Activated CD4-positive, alpha-beta T cell treated with anti-CD3 and anti-CD28 coated beads for 36 hours (primary cell): ENCODE measurements at regions of chr2 and their contacts with region 1.

Region 1: DNA sequence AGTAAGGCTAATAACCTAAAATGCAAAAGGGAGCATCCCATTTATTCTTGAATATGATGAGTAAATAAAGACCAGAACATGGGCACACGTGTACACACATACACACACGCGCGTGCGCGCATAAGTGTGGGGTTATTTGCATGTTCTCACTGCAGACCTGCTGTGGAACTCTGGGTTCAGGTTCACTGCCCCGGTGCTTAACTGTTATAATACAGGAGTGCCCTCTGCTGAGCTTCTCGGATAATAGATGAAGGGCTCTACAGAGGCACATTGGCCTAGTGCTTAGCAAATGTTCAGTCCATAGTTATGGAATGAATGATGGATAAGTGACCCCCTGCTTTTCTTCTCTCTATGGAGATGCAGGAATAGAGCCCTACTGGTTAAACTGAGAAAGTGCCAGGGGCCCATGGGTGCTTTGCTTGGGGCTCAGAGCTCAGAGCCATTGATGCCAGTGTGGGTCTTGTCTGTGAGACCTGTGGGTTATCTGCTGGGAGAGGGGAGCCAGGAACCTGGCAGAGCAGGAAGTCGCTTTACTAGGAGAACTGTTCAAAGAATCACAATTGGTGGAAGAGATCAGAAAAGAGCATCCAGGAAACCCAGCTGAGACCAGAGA is 3.6 kb upstream of the ARL4C start:
- DNase-seq: peak; percentile 81
- ATAC-seq: peak; percentile 69
- H3K4me3 Mint-ChIP-seq: no peak overlapping the region
- H3K27ac Mint-ChIP-seq: peak overlapping the region; percentile 32
- H3K4me1 Mint-ChIP-seq: peaks cover 27% of the 10 kb centered on the region
- H3K27me3 Mint-ChIP-seq: no peaks in the 10 kb centered on the region

Region 2: GRCh38 chr2:232838406-232838874 is 1662.1 kb before region 1 on chr2:
- CTCF ChIA-PET with region 1: no interaction called
- POLR2A ChIA-PET with region 1: no interaction called
- intact Hi-C with region 1: no loop called
- DNase-seq: peak; percentile 76
- ATAC-seq: peak; percentile 94
- H3K4me3 Mint-ChIP-seq: peak overlapping the region; percentile 15
- H3K27ac Mint-ChIP-seq: peak overlapping the region; percentile 84
- H3K4me1 Mint-ChIP-seq: peaks cover 24% of the 10 kb centered on the region
- H3K27me3 Mint-ChIP-seq: no peaks in the 10 kb centered on the region

Region 3: GRCh38 chr2:233854241-233854981 is 646.1 kb before region 1 on chr2 and contains the start of gene HJURP:
- CTCF ChIA-PET with region 1: interaction called, 3 read pairs
- POLR2A ChIA-PET with region 1: no interaction called
- intact Hi-C with region 1: loop called in 1 of 2 experiments (anchors 2 kb)
- DNase-seq: peak; percentile 96
- ATAC-seq: peak; percentile 95
- H3K4me3 Mint-ChIP-seq: peak within 1 kb of the TSS; percentile 97
- H3K27ac Mint-ChIP-seq: peak within 1 kb of the TSS; percentile 98
- H3K4me1 Mint-ChIP-seq: peaks cover 26% of the 10 kb centered on the region
- H3K27me3 Mint-ChIP-seq: no peaks in the 10 kb centered on the region
- total RNA-seq, gene HJURP: 94.6 to 111 TPM

Region 4: DNA sequence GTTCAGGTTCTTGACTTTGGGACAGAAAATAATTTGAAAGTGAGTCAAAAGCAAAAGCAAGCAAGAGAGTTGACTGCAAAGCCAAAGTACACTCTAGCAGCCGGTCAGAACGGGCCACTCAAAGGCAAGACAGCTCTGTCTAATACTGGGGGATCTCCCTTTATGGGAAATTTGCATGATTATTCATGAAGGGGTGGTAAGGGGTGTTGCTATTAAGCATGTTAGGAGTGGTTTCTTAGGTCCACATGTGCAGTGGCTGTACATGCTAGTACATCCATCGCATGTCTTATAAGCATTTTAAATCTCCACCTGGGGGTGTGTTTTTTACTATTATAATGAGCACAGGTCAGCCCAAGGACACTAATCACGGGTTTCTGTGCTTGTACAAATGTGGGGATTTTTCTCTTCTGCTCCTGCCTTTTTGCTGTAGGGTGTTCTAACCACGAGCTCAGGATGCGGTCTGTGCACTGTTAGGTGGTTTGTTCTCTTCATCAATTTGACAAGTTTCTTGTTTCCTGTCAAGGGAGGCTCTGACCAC is 510.2 kb before region 1 on chr2:
- CTCF ChIA-PET with region 1: no interaction called
- POLR2A ChIA-PET with region 1: no interaction called
- intact Hi-C with region 1: loop called in 1 of 2 experiments (anchors 5 kb)
- DNase-seq: peak; percentile 80
- ATAC-seq: peak; percentile 92
- H3K4me3 Mint-ChIP-seq: peak overlapping the region; percentile 13
- H3K27ac Mint-ChIP-seq: peak overlapping the region; percentile 28
- H3K4me1 Mint-ChIP-seq: peaks cover 48% of the 10 kb centered on the region
- H3K27me3 Mint-ChIP-seq: no peaks in the 10 kb centered on the region

Region 5: DNA sequence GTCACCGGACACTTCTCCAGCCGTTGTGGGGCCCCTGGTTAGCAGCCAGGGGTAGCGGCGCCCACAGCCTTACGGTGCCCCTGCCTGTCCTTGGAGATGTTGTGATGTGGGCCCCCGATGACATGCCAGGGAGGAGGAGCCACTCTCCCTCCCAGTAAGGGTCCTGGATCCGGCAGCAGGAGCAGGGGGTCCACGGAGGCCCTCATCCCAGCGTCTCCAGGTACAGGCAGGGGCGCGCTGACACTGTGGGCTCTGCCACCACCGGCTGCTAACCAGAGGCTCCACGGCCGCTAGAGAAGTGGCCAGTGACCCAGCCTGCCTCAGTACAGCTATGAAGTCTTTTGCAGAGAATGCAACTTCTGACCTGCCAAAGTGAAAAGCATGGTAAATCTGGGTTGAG is 328.8 kb before region 1 on chr2:
- CTCF ChIA-PET with region 1: no interaction called
- POLR2A ChIA-PET with region 1: no interaction called
- intact Hi-C with region 1: loop called in 1 of 2 experiments (anchors 1 kb)
- DNase-seq: no peak
- ATAC-seq: no peak
- H3K4me3 Mint-ChIP-seq: no peak overlapping the region
- H3K27ac Mint-ChIP-seq: no peak overlapping the region
- H3K4me1 Mint-ChIP-seq: no peaks in the 10 kb centered on the region
- H3K27me3 Mint-ChIP-seq: no peaks in the 10 kb centered on the region

Region 6: DNA sequence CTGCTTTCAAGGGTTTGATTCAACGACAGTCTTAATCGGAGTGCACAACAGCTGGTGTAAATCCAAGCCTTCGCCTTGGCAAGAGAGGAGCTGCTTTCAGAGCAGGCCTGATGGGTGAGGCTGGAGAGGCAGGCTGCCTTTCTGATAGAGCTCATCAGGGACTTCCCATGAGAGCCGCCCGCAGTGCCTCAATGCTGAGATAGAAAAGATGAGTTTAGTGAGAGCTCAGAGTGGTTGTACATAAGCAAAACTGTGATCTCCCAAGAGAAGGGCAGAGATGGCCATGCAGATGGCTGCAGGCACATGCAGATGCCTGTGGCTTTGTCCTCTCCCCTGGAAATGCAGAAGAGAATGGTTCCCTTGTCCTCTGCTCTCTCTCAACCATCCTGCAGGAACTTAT is 125.8 kb before region 1 on chr2:
- CTCF ChIA-PET with region 1: interaction called, 3 read pairs
- POLR2A ChIA-PET with region 1: interaction called, 4 read pairs
- intact Hi-C with region 1: loop called (anchors 2 kb)
- DNase-seq: no peak
- ATAC-seq: no peak
- H3K4me3 Mint-ChIP-seq: no peak overlapping the region
- H3K27ac Mint-ChIP-seq: no peak overlapping the region
- H3K4me1 Mint-ChIP-seq: peaks cover 68% of the 10 kb centered on the region
- H3K27me3 Mint-ChIP-seq: no peaks in the 10 kb centered on the region